Endothelial cell of umbilical vein (primary cell): ENCODE measurements at regions of chr1 and their contacts with region 1.

Region 1: GRCh38 chr1:234599617-234600417 is 10.2 kb downstream of the IRF2BP2 start:
- DNase-seq: peak; percentile 92
- H3K4me3 ChIP-seq: peak overlapping the region; percentile 18 to 53 (median 32)
- H3K27ac ChIP-seq: peak overlapping the region; percentile 87
- H3K4me1 ChIP-seq: peaks cover 50% of the 10 kb centered on the region
- H3K27me3 ChIP-seq: no peaks in the 10 kb centered on the region
- CTCF ChIP-seq: peak in 1 of 2 donors; percentile 3
- POLR2A ChIP-seq: no peak

Region 2: DNA sequence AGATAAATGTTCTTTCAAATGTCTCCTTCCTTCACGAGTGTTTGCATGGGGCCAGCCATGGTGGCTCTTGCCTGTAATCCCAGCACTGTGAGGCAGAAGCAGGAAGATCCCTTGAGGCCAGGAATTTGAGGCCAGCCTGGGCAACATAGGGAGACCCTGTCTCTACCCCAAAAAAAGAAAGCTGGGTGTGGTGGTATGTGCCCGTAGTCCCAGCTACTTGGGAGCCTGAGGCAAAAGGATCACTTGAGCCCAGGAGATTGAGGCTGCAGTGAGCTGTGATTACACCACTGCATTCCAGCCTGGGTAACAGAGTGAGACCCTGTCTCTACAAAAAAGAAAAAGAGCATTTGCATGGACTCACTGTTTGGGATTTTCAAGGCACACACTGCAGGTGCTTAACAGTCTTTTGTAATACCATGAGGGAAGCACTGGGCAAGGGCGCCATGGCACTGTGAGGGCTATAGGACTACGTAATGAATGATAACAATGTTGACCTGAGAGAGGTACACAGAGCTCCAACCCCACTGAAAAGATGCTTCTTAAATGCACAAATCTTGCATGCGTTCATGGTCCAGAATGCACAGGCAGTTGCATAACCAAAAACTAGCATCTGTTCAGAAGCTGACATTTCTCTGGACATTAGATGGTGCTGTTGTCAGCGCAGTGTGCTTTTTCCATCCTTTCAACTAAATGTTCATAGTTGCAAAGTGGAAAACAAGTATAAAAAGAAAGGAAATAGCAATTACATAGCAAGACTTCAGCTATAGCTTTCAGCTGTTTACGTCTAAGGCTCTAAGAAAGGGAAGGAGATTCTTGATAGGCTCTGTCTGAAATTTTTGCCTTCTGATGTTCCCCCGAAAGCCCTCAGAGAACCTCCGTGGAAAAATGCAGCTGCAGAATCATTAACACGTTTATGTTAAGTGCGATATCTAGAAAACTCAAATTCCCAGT is 113.0 kb before region 1 on chr1:
- CTCF ChIA-PET with region 1: interaction called, 13 read pairs
- POLR2A ChIA-PET with region 1: no interaction called
- dilution Hi-C with region 1: no loop called
- intact Hi-C with region 1: no loop called
- DNase-seq: peak; percentile 84
- H3K4me3 ChIP-seq: no peak overlapping the region
- H3K27ac ChIP-seq: no peak overlapping the region
- H3K4me1 ChIP-seq: peaks cover 7% of the 10 kb centered on the region
- H3K27me3 ChIP-seq: peaks cover 10 to 12% of the 10 kb centered on the region in 2 experiments
- CTCF ChIP-seq: peak; percentile 54 to 55
- POLR2A ChIP-seq: no peak

Region 3: GRCh38 chr1:234544087-234544579 is 55.7 kb before region 1 on chr1:
- CTCF ChIA-PET with region 1: interaction called, 6 read pairs
- POLR2A ChIA-PET with region 1: interaction called, 3 read pairs
- dilution Hi-C with region 1: no loop called
- intact Hi-C with region 1: loop called (anchors 1 kb)
- DNase-seq: peak; percentile 98
- H3K4me3 ChIP-seq: no peak overlapping the region
- H3K27ac ChIP-seq: peak overlapping the region; percentile 72
- H3K4me1 ChIP-seq: peaks cover 24% of the 10 kb centered on the region
- H3K27me3 ChIP-seq: no peaks in the 10 kb centered on the region
- CTCF ChIP-seq: no peak
- POLR2A ChIP-seq: no peak

Region 4: GRCh38 chr1:234631721-234632125 is 31.9 kb after region 1 on chr1:
- CTCF ChIA-PET with region 1: interaction called, 3 read pairs
- POLR2A ChIA-PET with region 1: no interaction called
- dilution Hi-C with region 1: no loop called
- intact Hi-C with region 1: loop called (anchors 1 kb)
- DNase-seq: peak; percentile 98
- H3K4me3 ChIP-seq: no peak overlapping the region
- H3K27ac ChIP-seq: peak overlapping the region; percentile 95
- H3K4me1 ChIP-seq: peaks cover 38% of the 10 kb centered on the region
- H3K27me3 ChIP-seq: no peaks in the 10 kb centered on the region
- CTCF ChIP-seq: no peak
- POLR2A ChIP-seq: no peak